Dendritic cell treated with granulocyte-macrophage colony-stimulating factor and Interleukin-4, amounts not matched to agents 40 ng/mL and 50 ng/mL, for 4 days (primary cell): ENCODE measurements at regions of chr1 and their contacts with region 1.

Region 1: GRCh38 chr1:230978491-230979388 is at the starts of genes ARV1 and TTC13:
- H3K4me3 Mint-ChIP-seq: peak within 1 kb of the TSS; percentile 83
- H3K27ac Mint-ChIP-seq: peak within 1 kb of the TSS; percentile 86
- H3K4me1 Mint-ChIP-seq: peaks cover 26% of the 10 kb centered on the region
- H3K27me3 Mint-ChIP-seq: no peaks in the 10 kb centered on the region

Region 2: DNA sequence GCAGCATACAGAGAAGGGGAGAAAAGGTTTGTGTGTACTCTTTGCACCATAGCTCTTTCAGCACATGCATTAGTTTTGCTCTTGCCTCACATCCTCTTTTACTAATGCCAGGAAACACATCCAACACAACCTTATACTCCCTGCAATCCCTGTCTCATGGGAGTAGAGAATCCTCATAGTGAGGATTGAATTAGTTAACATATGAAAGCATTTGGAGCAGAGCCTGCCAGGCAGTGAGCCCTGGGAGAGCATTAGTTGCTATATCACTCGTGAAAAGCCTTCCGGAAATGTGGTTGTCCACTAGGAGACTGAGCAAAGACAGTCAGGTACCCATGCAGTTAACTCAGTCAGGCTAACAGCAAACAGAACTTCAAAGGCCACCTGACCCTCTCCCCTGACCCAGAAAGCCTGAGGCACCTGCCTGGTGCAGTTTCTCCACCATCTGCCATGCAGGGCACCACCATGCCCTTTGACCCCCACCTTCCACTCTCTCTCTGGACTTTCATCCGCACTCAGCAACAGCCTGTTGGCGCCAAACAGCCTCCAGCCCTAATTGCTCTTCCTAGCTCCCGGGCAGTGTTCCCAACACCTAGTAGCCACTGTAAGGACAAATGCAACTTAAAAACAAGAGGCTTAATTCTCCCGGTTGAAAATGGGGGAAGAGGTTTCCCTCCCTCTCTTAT is 249.9 kb before region 1 on chr1:
- intact Hi-C with region 1: no loop called
- H3K4me3 Mint-ChIP-seq: no peak overlapping the region
- H3K27ac Mint-ChIP-seq: no peak overlapping the region
- H3K4me1 Mint-ChIP-seq: no peaks in the 10 kb centered on the region
- H3K27me3 Mint-ChIP-seq: peaks cover 2% of the 10 kb centered on the region

Region 3: DNA sequence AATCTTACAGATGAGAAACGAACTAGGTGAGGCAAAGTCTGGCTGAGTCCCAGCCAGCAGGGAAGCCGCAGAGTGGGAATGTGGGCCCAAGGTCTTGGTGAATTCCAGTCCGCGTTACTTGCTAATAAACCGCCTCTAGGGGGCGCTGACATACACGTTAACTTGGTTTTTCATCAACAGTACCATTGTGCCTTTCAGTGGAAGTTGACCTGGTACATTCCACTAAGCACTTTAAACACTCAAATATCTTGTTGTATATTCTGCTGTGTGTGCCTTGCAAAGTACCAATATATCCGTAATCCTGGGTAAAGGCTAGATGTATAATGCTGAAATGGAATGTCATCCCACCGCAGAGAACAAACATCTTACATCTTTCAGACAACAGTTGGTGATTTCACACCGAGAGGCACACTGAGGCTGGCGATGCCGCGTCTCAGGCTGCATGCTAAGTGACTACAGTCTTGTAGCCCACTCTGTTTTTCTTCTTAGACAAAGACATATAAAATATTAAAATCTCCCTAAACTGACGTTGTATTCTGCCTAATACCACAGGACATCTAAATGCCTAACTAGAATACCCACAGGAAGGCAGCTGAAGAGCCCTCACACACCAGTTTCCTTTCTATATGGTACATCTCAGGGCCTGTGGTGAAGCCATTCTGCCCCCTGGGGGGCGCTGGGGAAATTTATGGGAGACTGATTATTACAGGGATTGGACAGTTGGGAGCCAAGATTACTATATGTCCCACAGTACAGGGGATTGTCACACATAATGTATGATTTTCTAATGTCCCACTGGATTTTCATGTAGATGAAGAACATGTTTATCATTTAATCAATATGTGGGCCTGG is 61.2 kb before region 1 on chr1:
- intact Hi-C with region 1: loop called (anchors 2 kb)
- H3K4me3 Mint-ChIP-seq: no peak overlapping the region
- H3K27ac Mint-ChIP-seq: no peak overlapping the region
- H3K4me1 Mint-ChIP-seq: no peaks in the 10 kb centered on the region
- H3K27me3 Mint-ChIP-seq: no peaks in the 10 kb centered on the region

Region 4: DNA sequence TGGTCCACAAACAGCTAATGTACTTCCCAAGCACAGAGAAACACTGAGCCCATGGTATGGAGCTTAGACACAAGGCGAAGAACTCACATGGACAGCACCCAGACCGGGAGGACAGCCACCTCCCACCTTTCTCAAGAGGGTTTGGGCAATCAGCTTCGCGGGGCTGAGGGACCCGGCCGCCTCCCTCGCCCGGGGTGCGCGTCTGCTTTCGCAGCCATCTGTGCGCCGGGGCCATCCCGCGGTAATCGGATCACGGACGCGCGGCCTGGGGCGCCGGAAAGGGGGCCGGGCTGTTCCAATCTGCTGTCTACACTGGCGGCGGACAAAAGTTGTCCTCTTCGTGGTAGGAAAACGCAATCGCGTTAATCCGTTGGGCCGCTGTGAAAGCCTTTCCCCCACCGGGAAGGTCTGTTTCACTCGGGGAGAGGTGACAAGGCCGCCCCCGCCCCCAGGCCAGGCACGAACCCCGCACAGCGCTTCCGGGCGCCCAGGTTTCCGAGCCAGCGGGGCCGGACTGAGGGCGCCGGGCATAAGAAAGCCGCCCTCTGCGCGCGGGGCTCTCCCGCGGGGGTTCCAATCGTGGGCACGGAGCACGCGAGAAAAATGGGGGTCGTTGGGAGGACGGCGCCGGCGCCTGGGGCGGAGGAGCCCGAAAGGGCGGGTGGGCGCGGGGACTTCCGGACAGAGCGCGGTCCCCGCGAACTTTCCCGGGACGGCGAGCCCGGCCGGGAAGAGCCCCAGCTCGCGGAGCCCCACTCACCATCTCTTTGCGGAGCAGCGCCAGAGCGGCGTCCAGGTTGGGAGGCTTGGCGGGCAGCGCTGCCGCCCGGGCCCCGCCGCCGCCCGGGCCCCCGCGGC is 60.6 kb after region 1 on chr1:
- intact Hi-C with region 1: loop called (anchors 5 kb)
- H3K4me3 Mint-ChIP-seq: peak overlapping the region; percentile 75
- H3K27ac Mint-ChIP-seq: peak overlapping the region; percentile 52
- H3K4me1 Mint-ChIP-seq: peaks cover 34% of the 10 kb centered on the region
- H3K27me3 Mint-ChIP-seq: peaks cover 43% of the 10 kb centered on the region

Region 5: DNA sequence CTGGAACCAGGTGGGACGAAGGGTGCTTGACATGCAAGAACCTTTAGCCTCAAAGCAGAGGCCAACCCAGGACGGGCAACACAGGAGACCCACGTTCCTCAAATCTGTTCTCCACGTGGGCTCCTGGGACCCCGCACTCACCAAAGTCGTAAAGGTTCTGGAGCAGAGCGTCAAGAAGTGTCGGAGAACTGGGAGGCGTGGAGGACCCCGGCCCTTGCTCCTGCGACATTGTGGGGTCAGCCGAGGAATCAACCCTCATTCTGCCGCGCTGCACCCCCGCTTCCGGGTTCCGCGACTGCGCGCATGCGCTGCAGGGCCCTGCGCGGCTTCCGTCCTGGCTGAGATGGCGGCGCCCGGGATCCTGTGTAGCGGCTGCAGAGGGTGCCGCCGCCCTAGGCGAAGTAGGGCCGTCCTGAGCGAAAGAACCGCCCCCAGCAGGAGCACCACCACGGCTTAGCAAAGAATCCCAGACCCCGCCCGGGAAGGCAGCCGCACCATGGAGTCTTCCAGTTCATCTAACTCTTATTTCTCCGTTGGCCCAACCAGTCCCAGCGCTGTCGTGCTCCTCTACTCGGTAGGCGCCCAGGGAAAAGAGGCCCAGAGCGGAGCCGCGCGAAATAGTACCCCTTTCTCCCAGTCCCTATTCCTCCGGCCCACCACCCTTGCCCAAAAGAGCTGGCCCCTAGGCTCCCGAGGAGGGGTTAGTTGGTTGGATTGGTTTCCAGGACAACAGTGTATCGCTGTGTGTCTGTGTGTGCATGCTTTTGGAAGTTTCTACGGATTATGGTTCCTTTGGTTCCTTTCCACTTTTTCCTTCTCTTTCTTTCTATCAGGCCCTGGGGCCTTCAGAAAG is 262.4 kb after region 1 on chr1 and contains the start of gene GNPAT:
- intact Hi-C with region 1: loop called (anchors 2 kb)
- H3K4me3 Mint-ChIP-seq: peak within 1 kb of the TSS; percentile 98
- H3K27ac Mint-ChIP-seq: peak within 1 kb of the TSS; percentile 96
- H3K4me1 Mint-ChIP-seq: peaks cover 62% of the 10 kb centered on the region
- H3K27me3 Mint-ChIP-seq: no peaks in the 10 kb centered on the region

Region 6: DNA sequence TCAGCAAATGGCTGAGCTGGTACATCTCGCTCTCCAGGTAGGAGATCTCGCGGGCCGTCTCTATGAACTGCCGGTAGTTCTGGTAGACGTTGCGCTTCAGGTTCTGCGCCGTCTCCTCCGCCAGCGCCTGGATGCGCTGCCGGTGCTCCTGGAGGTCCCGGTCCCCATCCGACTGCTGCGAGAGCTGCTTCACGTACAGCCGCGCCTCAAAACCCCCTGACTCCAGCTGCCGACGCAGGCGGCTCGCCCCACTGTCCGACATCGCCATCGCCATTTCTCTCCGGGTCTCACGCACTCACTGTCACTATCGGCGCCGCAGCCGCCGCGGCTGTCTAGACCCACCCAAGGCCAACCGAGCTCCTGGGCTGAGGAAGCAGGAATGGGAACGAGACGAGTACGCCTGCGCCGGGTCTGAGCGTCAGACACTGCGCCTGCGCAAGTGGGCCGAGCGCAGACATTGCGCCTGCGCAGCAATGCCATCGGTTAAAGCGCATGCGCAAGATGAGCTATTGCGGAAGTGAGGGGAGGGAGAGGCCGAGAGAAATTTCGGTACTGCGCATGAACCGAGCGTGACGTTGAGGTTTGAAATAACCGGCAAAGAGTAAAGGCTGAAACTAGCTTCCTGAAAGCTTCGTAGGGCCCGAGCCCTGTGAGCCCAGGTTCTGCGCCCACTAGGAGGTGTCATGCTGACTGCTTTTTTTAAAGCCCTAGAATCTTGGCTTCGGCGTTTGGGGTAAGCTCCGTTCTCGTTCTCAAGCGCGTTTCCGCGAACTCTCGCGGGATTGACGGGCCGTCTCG is 358.9 kb after region 1 on chr1 and contains the start of gene EXOC8:
- intact Hi-C with region 1: loop called (anchors 5 kb)
- H3K4me3 Mint-ChIP-seq: peak within 1 kb of the TSS; percentile 96
- H3K27ac Mint-ChIP-seq: peak within 1 kb of the TSS; percentile 99
- H3K4me1 Mint-ChIP-seq: peaks cover 39% of the 10 kb centered on the region
- H3K27me3 Mint-ChIP-seq: no peaks in the 10 kb centered on the region